ENCODE measurements at regions of chr9 and their contacts with region 1.

Region 1: DNA sequence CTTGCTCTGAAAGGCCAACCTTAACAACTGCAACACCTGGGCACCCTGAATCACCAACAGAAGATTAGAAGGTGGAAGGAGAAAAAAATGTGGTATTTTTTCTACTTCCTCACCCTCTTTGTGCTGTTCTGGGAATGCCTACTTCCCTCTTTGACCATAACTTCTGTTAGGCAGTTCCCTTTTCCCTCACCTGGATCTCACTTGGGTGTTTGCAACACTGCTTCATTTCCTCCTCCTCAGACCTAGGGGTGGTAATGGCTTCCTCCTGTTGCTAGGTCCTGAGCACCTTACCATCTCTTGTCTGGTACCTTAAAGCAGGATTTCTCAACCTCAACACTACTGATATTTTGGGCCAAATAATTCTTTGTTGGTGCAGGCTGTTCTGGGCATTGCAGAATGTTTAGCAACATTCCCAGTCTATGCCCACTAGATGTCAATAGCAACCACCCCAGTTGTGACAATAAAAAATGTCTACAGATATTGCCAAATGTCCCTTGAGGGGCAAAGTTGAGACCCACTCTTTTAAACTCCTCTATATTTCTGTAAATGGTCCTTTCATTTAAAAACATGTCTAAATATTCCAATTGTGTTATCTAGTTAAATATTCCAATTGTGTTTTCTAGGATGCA is 299.9 kb upstream of the VLDLR start:
- DNase-seq: no peak
- ATAC-seq: peak; percentile 46

Region 2: DNA sequence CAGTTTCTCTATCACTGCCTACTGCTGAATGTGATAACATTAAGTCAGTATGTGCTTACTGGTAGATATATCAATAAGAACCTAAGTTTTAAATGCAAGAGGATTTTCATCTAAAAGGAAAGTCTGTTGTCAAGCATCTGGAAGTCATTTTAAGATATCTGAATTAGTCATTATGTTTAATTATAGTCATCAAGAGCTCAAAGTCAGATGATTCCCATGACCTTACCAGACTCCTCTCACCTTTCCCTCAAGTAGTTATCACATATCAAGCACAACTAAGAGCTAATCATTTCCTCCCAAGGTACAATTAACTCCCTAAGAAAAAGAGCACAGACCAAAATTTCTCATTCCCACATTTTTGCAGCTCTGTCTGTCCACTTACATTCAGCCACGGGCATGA is 476.8 kb after region 1 on chr9:
- intact Hi-C with region 1: loop called (anchors 10 kb)
- DNase-seq: no peak
- ATAC-seq: peak; percentile 67